Activated CD8-positive, alpha-beta memory T cell treated with anti-CD3 and anti-CD28 coated beads, Interleukin-2, amount 10 ng/mL, durations not matched to agents 7 days and 5 days (primary cell): ENCODE measurements at regions of chr14 and their contacts with region 1.

Region 1: DNA sequence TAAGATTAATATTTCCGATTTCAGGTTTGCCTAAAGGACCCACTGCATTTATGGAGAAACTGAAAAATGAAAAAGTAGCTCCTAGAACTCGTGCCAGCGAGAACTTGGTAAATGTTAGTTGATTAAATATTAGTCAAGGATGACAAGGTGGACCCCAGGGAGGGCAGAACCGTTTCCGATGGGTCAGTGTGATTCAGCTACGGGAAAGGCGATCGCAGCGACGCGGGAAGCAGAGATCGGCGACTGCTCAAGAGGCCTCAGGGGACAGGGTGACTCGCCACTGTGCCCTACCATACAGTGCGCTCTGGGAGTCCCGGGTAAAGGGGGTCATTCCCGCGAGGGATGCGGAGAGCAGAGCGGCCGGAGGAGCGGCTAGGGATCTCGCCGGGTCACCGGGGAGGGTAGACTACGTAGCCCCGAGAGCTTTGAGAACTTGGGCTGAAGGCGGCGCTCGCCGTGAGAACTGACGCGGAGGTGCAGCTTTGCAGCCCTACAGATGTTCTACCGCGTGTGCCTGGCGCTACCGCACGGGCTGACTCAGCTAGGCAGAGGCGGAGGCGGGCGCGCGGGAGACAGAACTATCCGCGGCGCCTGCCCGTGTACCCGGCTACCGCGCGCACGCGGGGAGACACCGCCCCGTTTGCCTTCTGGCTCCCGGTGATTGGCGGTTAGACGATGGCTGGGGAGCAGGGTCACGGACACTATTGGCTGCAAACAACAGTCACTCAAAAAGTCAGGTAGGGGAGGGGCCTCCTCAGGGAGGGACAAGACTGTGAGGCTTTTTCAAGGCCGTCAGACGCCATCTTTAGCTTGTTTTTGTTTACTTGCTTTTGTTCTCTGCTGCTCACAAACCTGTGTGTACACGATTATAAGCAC is 3.2 kb downstream of the C14orf93 start:
- DNase-seq: peak; percentile 98
- ATAC-seq: peak; percentile 97
- H3K4me3 Mint-ChIP-seq: peak overlapping the region; percentile 93
- H3K27ac Mint-ChIP-seq: peak overlapping the region; percentile 96
- H3K4me1 Mint-ChIP-seq: peaks cover 44% of the 10 kb centered on the region
- H3K27me3 Mint-ChIP-seq: no peaks in the 10 kb centered on the region

Region 2: GRCh38 chr14:23025151-23025814 is 18.5 kb after region 1 on chr14:
- CTCF ChIA-PET with region 1: interaction called, 12 read pairs
- DNase-seq: no peak
- ATAC-seq: no peak
- H3K4me3 Mint-ChIP-seq: no peak overlapping the region
- H3K27ac Mint-ChIP-seq: peak overlapping the region; percentile 9
- H3K4me1 Mint-ChIP-seq: peaks cover 25% of the 10 kb centered on the region
- H3K27me3 Mint-ChIP-seq: no peaks in the 10 kb centered on the region